PC-3 (cell line): ENCODE measurements at regions of chr5 and their contacts with region 1.

Region 1: GRCh38 chr5:72394688-72395087 is 74.5 kb downstream of the PTCD2 start:
- DNase-seq: peak; percentile 30
- ATAC-seq: no peak
- H3K4me3 ChIP-seq: no peak overlapping the region
- H3K27ac ChIP-seq: no peak overlapping the region
- H3K4me1 ChIP-seq: peaks cover 32% of the 10 kb centered on the region
- H3K27me3 ChIP-seq: no peaks in the 10 kb centered on the region
- CTCF ChIP-seq: peak; percentile 52; the same call in 1 of the 2 replicates

Region 2: DNA sequence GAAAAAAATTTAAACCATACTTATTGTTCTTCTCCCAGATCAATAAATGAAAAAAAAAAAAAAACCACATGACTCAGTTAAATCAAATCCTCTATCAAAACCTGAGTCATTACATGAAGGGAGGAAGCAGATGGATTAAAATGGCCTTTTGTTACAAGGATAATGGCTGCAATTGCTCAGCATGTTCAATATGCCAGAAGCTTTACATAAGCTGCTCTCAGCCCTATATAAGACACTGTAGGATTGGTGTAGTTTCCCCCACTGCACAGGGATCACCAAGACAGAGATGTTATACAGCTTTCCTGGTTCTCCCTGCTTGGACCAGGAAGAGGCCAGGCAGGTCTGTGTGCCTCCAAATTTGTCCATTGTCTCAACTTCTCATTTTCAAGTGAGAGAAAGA is 389.0 kb before region 1 on chr5:
- CTCF ChIA-PET with region 1: no interaction called
- POLR2A ChIA-PET with region 1: no interaction called
- intact Hi-C with region 1: no loop called
- DNase-seq: no peak
- ATAC-seq: no peak; the same call in 1 of the 2 replicates
- H3K4me3 ChIP-seq: no peak overlapping the region
- H3K27ac ChIP-seq: no peak overlapping the region
- H3K4me1 ChIP-seq: peaks cover 3% of the 10 kb centered on the region; the same call in 1 of the 2 replicates
- H3K27me3 ChIP-seq: no peaks in the 10 kb centered on the region
- CTCF ChIP-seq: no peak

Region 3: DNA sequence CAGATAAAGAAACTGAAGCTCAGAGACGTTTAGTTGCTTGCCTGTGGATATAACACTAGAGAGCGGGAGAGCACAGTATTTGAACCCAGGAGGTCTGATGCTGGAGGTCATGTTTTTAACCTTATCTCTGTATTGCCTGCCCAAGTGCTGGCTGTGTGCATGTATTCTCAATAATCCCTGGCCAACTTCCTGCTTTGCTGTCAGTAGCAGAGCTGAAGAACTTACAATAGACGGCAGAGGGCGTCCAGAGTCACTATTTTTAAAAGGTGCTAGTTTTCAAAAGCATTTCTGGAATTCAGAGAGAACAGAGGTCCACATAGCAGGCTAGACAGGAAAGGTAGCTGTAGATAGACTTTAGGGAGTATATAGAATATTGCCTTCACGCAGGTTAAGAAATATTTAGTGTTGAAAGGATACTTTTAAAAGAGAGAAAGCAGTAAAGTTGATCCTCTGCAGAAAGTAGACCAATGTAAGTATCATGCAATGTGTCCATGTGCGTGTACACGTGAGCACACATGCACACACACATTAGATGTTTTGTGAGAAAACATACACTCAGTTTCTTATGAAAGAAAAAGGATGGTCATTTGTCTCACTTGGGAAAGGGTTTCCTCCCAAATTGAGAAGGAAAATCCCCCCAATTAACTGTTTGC is 28.2 kb before region 1 on chr5:
- CTCF ChIA-PET with region 1: no interaction called
- POLR2A ChIA-PET with region 1: no interaction called
- intact Hi-C with region 1: loop called (anchors 2 kb)
- DNase-seq: peak; percentile 78
- ATAC-seq: peak; percentile 73
- H3K4me3 ChIP-seq: no peak overlapping the region
- H3K27ac ChIP-seq: no peak overlapping the region
- H3K4me1 ChIP-seq: peaks cover 19% of the 10 kb centered on the region
- H3K27me3 ChIP-seq: no peaks in the 10 kb centered on the region
- CTCF ChIP-seq: peak; percentile 83

Region 4: DNA sequence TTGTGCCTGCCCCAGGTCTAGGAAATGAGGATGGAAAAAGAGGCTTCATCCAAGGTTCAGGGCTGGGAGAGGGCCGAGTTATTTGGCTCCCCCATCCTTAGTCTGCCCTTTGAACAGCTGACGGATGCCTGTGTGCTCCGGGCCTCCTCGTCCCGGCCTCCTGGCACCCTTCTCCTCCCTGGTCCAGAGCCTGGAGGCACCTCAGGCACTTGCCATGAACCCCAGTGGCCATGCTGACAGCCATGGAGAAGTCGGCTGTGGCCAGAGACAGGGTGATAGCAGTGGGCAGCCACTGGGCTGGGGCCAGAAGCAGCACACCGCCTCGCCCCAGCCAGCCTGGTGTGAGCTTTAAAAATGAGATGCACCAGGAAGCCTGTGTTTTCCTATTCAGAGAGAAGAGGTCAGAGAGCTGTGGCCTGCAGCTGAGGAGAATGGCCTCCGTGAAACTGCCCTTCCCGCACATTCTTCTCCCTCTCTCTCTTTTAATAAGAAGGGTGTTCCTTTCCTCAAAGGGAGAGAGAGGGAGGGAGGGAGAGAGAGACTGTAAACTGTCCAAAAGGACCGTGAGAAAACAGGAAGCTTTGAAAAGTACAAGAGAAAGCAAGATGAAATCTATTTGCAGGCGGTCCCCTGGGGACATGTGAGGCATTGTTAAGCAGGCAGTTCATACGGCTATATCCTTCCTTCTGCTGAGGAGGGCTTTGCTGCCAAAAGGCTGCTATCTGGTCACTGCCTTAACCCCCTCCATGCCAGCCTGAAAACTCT is 57.2 kb after region 1 on chr5:
- CTCF ChIA-PET with region 1: no interaction called
- POLR2A ChIA-PET with region 1: no interaction called
- intact Hi-C with region 1: loop called (anchors 5 kb)
- DNase-seq: peak; percentile 40
- ATAC-seq: peak; percentile 66
- H3K4me3 ChIP-seq: peak overlapping the region; percentile 23; the same call in 1 of the 2 replicates
- H3K27ac ChIP-seq: peak overlapping the region; percentile 55
- H3K4me1 ChIP-seq: peaks cover 20% of the 10 kb centered on the region
- H3K27me3 ChIP-seq: no peaks in the 10 kb centered on the region
- CTCF ChIP-seq: no peak

Region 5: GRCh38 chr5:72692231-72692637 is 297.5 kb after region 1 on chr5:
- CTCF ChIA-PET with region 1: no interaction called
- POLR2A ChIA-PET with region 1: no interaction called
- intact Hi-C with region 1: no loop called
- DNase-seq: no peak
- ATAC-seq: peak; percentile 37; the same call in 1 of the 2 replicates
- H3K4me3 ChIP-seq: no peak overlapping the region
- H3K27ac ChIP-seq: no peak overlapping the region
- H3K4me1 ChIP-seq: no peaks in the 10 kb centered on the region
- H3K27me3 ChIP-seq: no peaks in the 10 kb centered on the region
- CTCF ChIP-seq: no peak